ENCODE measurements at regions of chr16 and their contacts with region 1.

Region 1: GRCh38 chr16:4330277-4330874 is 14.5 kb downstream of the GLIS2 start:
- DNase-seq: peak; percentile 89 to 95
- ATAC-seq: peak; percentile 82
- H3K4me3 ChIP-seq: no peak overlapping the region
- H3K27ac ChIP-seq: no peak overlapping the region
- H3K4me1 ChIP-seq: no peaks in the 10 kb centered on the region
- H3K27me3 ChIP-seq: no peaks in the 10 kb centered on the region

Region 2: GRCh38 chr16:3971261-3971660 is 359.1 kb before region 1 on chr16:
- intact Hi-C with region 1: loop called in 1 of 2 experiments (anchors 10 kb)
- DNase-seq: no peak
- ATAC-seq: no peak
- H3K4me3 ChIP-seq: no peak overlapping the region
- H3K27ac ChIP-seq: no peak overlapping the region
- H3K4me1 ChIP-seq: no peaks in the 10 kb centered on the region
- H3K27me3 ChIP-seq: no peaks in the 10 kb centered on the region

Region 3: DNA sequence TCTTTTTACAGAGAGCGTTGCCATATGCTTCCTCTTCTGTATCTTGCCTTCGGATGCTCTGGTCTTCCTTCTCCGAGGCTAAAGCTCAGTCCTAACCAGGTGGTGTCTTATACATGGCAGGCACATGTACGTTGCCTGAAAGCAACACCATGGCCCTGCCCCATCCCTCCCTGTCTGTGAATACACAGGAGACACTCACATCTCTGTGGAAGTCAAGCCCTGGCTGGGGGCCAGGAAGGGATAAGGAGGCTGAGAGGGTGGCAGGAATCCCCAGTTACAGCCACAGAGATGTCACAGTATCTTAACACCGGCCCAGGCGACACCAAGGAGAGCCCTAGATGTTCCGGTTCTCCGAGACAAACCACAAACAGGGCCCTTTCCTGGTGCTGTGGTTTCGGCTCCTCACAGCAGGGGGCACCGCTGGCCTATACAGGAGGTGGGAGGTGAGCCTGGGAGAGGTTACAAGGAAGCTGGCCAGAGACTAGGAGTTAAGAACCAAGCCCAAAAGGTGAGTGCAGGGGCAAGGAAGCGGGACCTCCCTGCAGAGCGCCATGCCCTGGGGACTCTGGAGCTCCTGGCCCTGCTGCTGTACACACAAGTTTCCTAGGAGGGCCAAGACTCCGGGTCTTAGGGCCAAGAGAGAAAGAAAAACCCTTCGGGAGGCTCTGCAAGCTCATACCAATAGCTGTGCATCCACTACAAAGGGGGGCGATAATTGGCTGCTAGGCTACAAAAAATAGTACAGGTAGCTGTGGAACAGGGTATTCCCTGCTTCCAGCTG is 130.2 kb before region 1 on chr16:
- intact Hi-C with region 1: loop called (anchors 2 to 5 kb)
- DNase-seq: peak; percentile 75 to 92
- ATAC-seq: peak; percentile 80
- H3K4me3 ChIP-seq: no peak overlapping the region
- H3K27ac ChIP-seq: no peak overlapping the region
- H3K4me1 ChIP-seq: no peaks in the 10 kb centered on the region
- H3K27me3 ChIP-seq: no peaks in the 10 kb centered on the region

Region 4: GRCh38 chr16:4271176-4272066 is 59.0 kb before region 1 on chr16:
- intact Hi-C with region 1: loop called in 1 of 2 experiments (anchors 5 kb)
- DNase-seq: peak; percentile 96 to 98
- ATAC-seq: peak; percentile 91
- H3K4me3 ChIP-seq: peak overlapping the region; percentile 66 to 79
- H3K27ac ChIP-seq: peak overlapping the region in 1 of 2 donors; percentile 4
- H3K4me1 ChIP-seq: no peaks in the 10 kb centered on the region
- H3K27me3 ChIP-seq: no peaks in the 10 kb centered on the region

Region 5: DNA sequence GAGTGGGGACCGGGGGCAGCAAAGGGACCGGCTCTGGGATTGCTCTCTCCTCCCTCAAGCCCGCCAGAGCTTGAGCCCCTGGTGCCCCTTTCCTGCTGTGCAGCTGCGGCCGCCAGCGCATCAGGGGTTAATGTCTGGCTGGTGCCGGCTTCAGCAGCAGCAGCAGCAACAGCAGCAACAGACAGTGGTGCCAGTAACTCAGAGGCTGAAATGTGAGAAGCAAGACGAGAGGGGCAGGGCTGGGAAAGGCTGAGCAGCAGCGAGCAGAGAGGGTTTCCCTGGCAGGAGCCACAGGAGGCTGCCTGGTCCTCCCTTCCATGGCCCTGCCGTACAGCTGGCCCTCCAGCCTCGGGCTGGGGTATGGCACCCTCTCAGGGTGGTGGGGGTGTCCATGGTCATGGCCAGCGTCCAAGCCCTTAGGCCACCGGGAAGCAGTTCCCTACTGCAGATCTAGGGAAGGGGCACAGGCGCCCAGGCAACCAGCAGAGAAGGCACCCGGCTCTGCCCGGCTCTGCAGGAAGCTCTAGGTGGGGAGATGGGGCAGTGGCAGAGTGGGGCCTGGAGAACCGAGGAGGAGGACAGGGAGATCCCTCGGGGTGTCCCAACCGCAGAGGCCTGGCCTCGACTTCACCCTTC is 36.4 kb before region 1 on chr16:
- intact Hi-C with region 1: loop called in 1 of 2 experiments (anchors 5 kb)
- DNase-seq: peak; percentile 76 to 80
- ATAC-seq: peak; percentile 75
- H3K4me3 ChIP-seq: no peak overlapping the region
- H3K27ac ChIP-seq: peak overlapping the region in 1 of 2 donors; percentile 81
- H3K4me1 ChIP-seq: peaks cover 0 to 3% of the 10 kb centered on the region in 2 donors
- H3K27me3 ChIP-seq: no peaks in the 10 kb centered on the region

Measured in aorta (tissue), 5 donors.